Panc1 (cell line): ENCODE measurements at regions of chr11 and their contacts with region 1.

Region 1: DNA sequence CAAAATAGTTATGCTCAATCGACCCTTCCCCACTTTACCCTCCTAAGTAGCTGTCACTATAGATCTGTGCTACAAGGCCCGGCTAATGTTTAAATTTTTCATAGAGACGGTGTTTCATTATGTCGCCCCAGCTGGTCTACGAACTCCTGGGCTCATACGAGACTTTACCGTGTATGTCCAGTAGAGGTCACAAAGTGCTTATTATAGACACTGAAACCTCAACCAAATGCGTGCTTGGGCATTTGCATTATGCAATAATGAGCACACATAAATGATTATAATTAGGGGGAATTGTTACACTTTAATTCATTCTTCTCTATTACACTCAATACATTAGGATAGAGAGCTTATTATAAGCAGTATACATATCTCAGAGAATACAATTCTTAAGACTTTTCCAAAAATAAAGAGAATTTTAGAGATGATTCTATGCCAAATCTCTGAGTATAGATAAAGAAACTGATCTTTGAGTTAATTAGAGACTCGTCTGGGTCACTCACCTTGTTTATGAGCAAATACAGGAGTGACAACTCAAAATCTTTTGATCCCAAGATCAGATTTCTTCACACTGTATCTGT is 12.5 kb upstream of the MRPL16 start:
- DNase-seq: peak; percentile 38
- ATAC-seq: peak; percentile 95
- H3K4me3 ChIP-seq: no peak overlapping the region
- H3K27ac ChIP-seq: no peak overlapping the region
- H3K4me1 ChIP-seq: no peaks in the 10 kb centered on the region
- H3K27me3 ChIP-seq: no peaks in the 10 kb centered on the region
- CTCF ChIP-seq: peak; percentile 78

Region 2: GRCh38 chr11:59787816-59788215 is 35.3 kb before region 1 on chr11:
- CTCF ChIA-PET with region 1: no interaction called
- POLR2A ChIA-PET with region 1: no interaction called
- in situ Hi-C with region 1: no loop called
- intact Hi-C with region 1: no loop called
- DNase-seq: no peak
- ATAC-seq: no peak
- H3K4me3 ChIP-seq: no peak overlapping the region
- H3K27ac ChIP-seq: peak overlapping the region; percentile 54
- H3K4me1 ChIP-seq: peaks cover 15% of the 10 kb centered on the region
- H3K27me3 ChIP-seq: no peaks in the 10 kb centered on the region
- CTCF ChIP-seq: no peak

Region 3: GRCh38 chr11:59866397-59866796 is 43.3 kb after region 1 on chr11 and contains the start of gene TCN1:
- CTCF ChIA-PET with region 1: no interaction called
- POLR2A ChIA-PET with region 1: no interaction called
- in situ Hi-C with region 1: no loop called
- intact Hi-C with region 1: no loop called
- DNase-seq: no peak
- ATAC-seq: no peak
- H3K4me3 ChIP-seq: no peak within 1 kb of the TSS
- H3K27ac ChIP-seq: no peak within 1 kb of the TSS
- H3K4me1 ChIP-seq: no peaks in the 10 kb centered on the region
- H3K27me3 ChIP-seq: no peaks in the 10 kb centered on the region
- CTCF ChIP-seq: no peak
- total RNA-seq, gene TCN1: not detected

Region 4: GRCh38 chr11:59918987-59919589 is 96.0 kb after region 1 on chr11:
- CTCF ChIA-PET with region 1: interaction called, 6 read pairs
- POLR2A ChIA-PET with region 1: no interaction called
- in situ Hi-C with region 1: no loop called
- intact Hi-C with region 1: loop called (anchors 2 kb)
- DNase-seq: no peak
- ATAC-seq: no peak
- H3K4me3 ChIP-seq: no peak overlapping the region
- H3K27ac ChIP-seq: no peak overlapping the region
- H3K4me1 ChIP-seq: no peaks in the 10 kb centered on the region
- H3K27me3 ChIP-seq: no peaks in the 10 kb centered on the region
- CTCF ChIP-seq: peak; percentile 64; the same call in 1 of the 2 replicates

Region 5: DNA sequence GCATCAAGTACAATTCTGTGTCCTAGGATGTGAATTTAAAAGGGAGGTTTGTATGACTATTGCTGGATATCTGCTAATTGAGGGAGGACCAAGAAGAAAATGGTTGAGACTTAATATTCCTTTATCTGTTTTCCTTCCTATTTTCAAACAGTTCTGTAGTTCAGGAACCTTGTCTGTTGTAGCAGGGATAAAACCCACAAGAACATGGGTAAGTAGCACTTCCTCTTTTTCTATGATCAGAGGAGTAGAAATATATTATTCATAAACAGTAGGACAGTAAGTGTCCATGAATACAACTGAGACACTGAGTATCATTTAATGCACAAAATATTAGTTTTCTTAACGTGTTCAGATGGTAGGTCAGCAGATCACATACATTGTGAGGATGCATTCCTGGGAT is 241.0 kb after region 1 on chr11:
- CTCF ChIA-PET with region 1: no interaction called
- POLR2A ChIA-PET with region 1: no interaction called
- in situ Hi-C with region 1: no loop called
- intact Hi-C with region 1: no loop called
- DNase-seq: no peak
- ATAC-seq: no peak
- H3K4me3 ChIP-seq: no peak overlapping the region
- H3K27ac ChIP-seq: no peak overlapping the region
- H3K4me1 ChIP-seq: no peaks in the 10 kb centered on the region
- H3K27me3 ChIP-seq: no peaks in the 10 kb centered on the region
- CTCF ChIP-seq: no peak

Region 6: DNA sequence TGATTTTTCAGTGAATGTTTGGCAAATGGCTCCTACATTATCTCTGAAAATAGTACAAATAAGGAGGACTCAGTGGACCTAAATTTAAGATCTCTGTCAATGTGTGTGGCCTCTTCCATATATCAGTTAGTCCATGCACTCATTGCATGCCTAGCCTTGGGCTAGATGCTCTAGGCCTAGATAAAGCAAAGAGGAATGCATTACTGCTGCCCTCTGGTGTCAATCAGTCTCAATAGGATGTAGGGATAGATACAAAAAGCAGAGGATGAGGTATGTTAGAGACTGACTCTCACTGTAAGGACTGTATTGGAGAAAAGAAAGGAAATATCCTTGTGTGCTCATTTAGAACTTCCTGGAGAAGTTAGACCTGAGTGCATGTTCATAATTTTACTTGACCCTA is 307.4 kb after region 1 on chr11:
- CTCF ChIA-PET with region 1: no interaction called
- POLR2A ChIA-PET with region 1: no interaction called
- in situ Hi-C with region 1: no loop called
- intact Hi-C with region 1: loop called (anchors 2 kb)
- DNase-seq: no peak
- ATAC-seq: peak; percentile 83; the same call in 1 of the 2 replicates
- H3K4me3 ChIP-seq: no peak overlapping the region
- H3K27ac ChIP-seq: no peak overlapping the region
- H3K4me1 ChIP-seq: no peaks in the 10 kb centered on the region
- H3K27me3 ChIP-seq: no peaks in the 10 kb centered on the region
- CTCF ChIP-seq: peak; percentile 59

Region 7: GRCh38 chr11:60169264-60169915 is 346.3 kb after region 1 on chr11:
- CTCF ChIA-PET with region 1: no interaction called
- POLR2A ChIA-PET with region 1: no interaction called
- in situ Hi-C with region 1: no loop called
- intact Hi-C with region 1: no loop called
- DNase-seq: peak; percentile 17
- ATAC-seq: no peak
- H3K4me3 ChIP-seq: no peak overlapping the region
- H3K27ac ChIP-seq: no peak overlapping the region
- H3K4me1 ChIP-seq: no peaks in the 10 kb centered on the region
- H3K27me3 ChIP-seq: no peaks in the 10 kb centered on the region
- CTCF ChIP-seq: peak; percentile 60

Region 8: GRCh38 chr11:60195923-60196368 is 372.9 kb after region 1 on chr11:
- CTCF ChIA-PET with region 1: no interaction called
- POLR2A ChIA-PET with region 1: no interaction called
- in situ Hi-C with region 1: no loop called
- intact Hi-C with region 1: loop called (anchors 5 kb)
- DNase-seq: no peak
- ATAC-seq: no peak
- H3K4me3 ChIP-seq: no peak overlapping the region
- H3K27ac ChIP-seq: no peak overlapping the region
- H3K4me1 ChIP-seq: no peaks in the 10 kb centered on the region; the same call in 1 of the 2 replicates
- H3K27me3 ChIP-seq: no peaks in the 10 kb centered on the region
- CTCF ChIP-seq: no peak

Region 9: DNA sequence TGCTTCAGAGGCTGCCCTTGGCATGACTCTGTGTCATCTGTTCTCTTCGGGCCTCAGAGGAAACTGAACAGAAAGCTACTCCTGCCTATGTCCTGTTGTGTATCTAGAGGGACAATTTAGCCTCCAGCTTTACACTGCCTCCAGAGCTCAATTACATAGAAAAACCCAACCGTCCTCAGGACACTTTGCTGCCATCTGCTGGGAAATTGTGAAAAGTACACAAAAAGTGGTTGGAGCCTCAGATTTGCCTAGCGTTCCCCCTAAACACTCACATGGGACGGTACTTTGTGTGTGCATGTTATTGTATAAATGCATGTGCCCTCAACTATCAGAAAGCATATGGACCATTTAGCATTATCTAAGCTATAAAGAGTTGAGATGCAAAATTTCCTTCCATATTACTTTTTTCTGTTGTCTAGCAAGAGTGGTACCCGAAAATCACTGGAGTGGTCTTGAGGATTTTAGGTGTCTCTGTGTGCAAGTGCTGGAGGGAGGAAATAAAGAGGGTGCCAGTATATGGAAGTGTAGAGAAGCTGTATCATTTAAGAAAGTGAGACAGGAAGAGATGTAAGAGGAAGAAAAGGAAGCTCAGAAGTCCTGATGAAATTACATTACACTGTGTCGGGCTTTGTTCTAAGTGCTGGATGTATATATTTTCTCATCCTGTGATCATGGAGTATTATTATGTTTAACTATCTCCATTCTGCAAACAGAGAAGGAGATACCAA is 428.6 kb after region 1 on chr11:
- CTCF ChIA-PET with region 1: interaction called, 7 read pairs
- POLR2A ChIA-PET with region 1: no interaction called
- in situ Hi-C with region 1: no loop called
- intact Hi-C with region 1: loop called (anchors 5 kb)
- DNase-seq: peak; percentile 7
- ATAC-seq: peak; percentile 63; the same call in 1 of the 2 replicates
- H3K4me3 ChIP-seq: no peak overlapping the region
- H3K27ac ChIP-seq: no peak overlapping the region
- H3K4me1 ChIP-seq: no peaks in the 10 kb centered on the region
- H3K27me3 ChIP-seq: no peaks in the 10 kb centered on the region
- CTCF ChIP-seq: peak; percentile 74